B cell (primary cell): ENCODE measurements at regions of chr18 and their contacts with region 1.

Region 1: DNA sequence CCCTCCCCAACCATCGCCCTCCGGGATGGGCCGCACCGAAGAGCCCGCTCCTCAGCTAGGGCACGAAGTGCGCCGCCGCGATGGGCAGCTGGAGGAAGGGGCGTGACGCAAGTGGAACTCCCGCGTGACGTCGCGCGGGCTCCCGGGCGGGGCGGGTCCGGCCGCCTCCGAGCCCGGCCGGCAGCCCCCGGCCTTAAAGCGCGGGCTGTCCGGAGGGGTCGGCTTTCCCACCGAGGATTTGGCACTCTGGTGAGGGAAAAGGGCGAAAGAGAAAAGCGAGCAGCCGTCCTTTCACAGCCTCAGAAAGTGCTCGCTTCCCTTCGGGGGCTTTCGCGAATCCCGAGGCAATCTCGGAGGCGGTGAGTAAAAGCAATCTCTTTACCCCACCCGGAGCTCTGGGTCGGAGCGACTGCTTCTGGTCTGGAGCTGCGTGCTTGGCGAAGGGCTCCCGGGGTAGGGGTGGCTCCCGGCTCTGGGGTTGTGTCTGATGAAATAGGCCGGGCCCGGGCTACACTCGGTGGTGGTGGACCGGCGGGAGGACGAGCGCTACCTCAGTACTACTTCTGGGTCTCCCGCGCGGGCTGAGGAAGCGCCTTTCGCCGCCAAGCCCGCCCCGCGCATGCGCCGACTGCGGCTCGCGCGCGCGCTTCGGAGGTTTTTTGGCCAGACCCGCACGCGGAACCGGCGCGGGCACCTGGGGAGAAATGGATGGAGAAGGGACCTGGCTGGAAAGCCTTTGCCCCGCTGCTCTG is at the start of gene RBBP8:
- DNase-seq: peak; percentile 94
- ATAC-seq: peak; percentile 82
- H3K4me3 ChIP-seq: peak within 1 kb of the TSS; percentile 81 to 99 (median 90)
- H3K4me3 Mint-ChIP-seq: peak within 1 kb of the TSS; percentile 88
- H3K27ac ChIP-seq: peak within 1 kb of the TSS; percentile 99
- H3K27ac Mint-ChIP-seq: peak within 1 kb of the TSS; percentile 96
- H3K4me1 ChIP-seq: peaks cover 6 to 11% of the 10 kb centered on the region in 2 donors
- H3K4me1 Mint-ChIP-seq: peaks cover 18% of the 10 kb centered on the region
- H3K27me3 ChIP-seq: no peaks in the 10 kb centered on the region
- H3K27me3 Mint-ChIP-seq: no peaks in the 10 kb centered on the region
- CTCF ChIP-seq: no peak
- total RNA-seq, gene RBBP8: 18.0 and 19.3 TPM in 2 replicates

Region 2: GRCh38 chr18:21111341-21112139 is 1821.8 kb before region 1 on chr18 and contains the start of gene ROCK1:
- CTCF ChIA-PET with region 1: no interaction called
- POLR2A ChIA-PET with region 1: no interaction called
- intact Hi-C with region 1: loop called (anchors 5 kb)
- DNase-seq: peak; percentile 97
- ATAC-seq: peak; percentile 87
- H3K4me3 ChIP-seq: peak within 1 kb of the TSS; percentile 96 to 100 (median 98)
- H3K4me3 Mint-ChIP-seq: peak within 1 kb of the TSS; percentile 92
- H3K27ac ChIP-seq: peak within 1 kb of the TSS; percentile 94 to 96
- H3K27ac Mint-ChIP-seq: peak within 1 kb of the TSS; percentile 99
- H3K4me1 ChIP-seq: peaks cover 28 to 38% of the 10 kb centered on the region in 2 donors
- H3K4me1 Mint-ChIP-seq: peaks cover 8% of the 10 kb centered on the region
- H3K27me3 ChIP-seq: no peaks in the 10 kb centered on the region
- H3K27me3 Mint-ChIP-seq: no peaks in the 10 kb centered on the region
- CTCF ChIP-seq: no peak
- total RNA-seq, gene ROCK1: 102 and 103 TPM in 2 replicates

Region 3: GRCh38 chr18:22115573-22115972 is 817.8 kb before region 1 on chr18:
- CTCF ChIA-PET with region 1: no interaction called
- POLR2A ChIA-PET with region 1: no interaction called
- intact Hi-C with region 1: no loop called
- DNase-seq: no peak
- ATAC-seq: no peak
- H3K4me3 ChIP-seq: no peak overlapping the region
- H3K4me3 Mint-ChIP-seq: no peak overlapping the region
- H3K27ac ChIP-seq: no peak overlapping the region
- H3K27ac Mint-ChIP-seq: no peak overlapping the region
- H3K4me1 ChIP-seq: no peaks in the 10 kb centered on the region
- H3K4me1 Mint-ChIP-seq: no peaks in the 10 kb centered on the region
- H3K27me3 ChIP-seq: no peaks in the 10 kb centered on the region
- H3K27me3 Mint-ChIP-seq: no peaks in the 10 kb centered on the region
- CTCF ChIP-seq: no peak

Region 4: DNA sequence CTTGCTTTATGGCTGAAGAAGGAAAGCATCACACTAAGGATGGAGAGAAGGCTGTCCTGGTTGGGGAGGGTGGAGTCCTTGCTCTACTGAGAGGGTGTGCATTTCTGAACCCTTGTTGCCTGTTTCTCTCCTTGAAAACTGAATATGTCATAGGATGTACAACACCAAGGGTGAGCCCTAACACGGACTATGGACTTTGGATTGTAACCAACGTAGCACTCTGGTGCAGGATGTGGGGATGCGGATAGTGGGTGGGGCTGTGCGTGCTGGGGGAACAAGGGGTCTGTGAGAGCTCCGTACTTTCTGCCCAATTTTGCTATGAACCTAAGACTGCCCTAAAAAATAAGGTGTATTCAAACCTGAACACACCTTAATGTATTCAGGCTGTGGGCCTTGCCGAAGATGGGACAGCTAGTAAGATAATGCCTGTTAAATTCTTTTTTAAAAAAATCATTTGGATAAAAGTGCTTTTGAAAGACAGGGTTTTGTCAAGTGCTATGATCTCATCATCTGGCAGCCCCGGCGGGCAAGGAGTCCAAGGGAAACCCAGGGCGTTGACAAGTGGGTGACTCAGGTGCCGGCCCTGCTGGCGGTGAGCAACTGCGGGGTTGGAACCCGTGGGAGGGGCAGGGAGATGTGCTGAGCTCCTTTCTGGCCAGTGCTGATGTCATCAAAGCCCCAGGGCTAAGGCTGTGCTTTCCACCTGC is 710.0 kb before region 1 on chr18:
- CTCF ChIA-PET with region 1: no interaction called
- POLR2A ChIA-PET with region 1: no interaction called
- intact Hi-C with region 1: no loop called
- DNase-seq: no peak
- ATAC-seq: no peak
- H3K4me3 ChIP-seq: no peak overlapping the region
- H3K4me3 Mint-ChIP-seq: no peak overlapping the region
- H3K27ac ChIP-seq: no peak overlapping the region
- H3K27ac Mint-ChIP-seq: no peak overlapping the region
- H3K4me1 ChIP-seq: no peaks in the 10 kb centered on the region
- H3K4me1 Mint-ChIP-seq: no peaks in the 10 kb centered on the region
- H3K27me3 ChIP-seq: no peaks in the 10 kb centered on the region
- H3K27me3 Mint-ChIP-seq: peaks cover 3% of the 10 kb centered on the region
- CTCF ChIP-seq: no peak

Region 5: GRCh38 chr18:22710628-22711380 is 222.6 kb before region 1 on chr18:
- CTCF ChIA-PET with region 1: no interaction called
- POLR2A ChIA-PET with region 1: no interaction called
- intact Hi-C with region 1: no loop called
- DNase-seq: no peak
- ATAC-seq: no peak
- H3K4me3 ChIP-seq: no peak overlapping the region
- H3K4me3 Mint-ChIP-seq: no peak overlapping the region
- H3K27ac ChIP-seq: no peak overlapping the region
- H3K27ac Mint-ChIP-seq: no peak overlapping the region
- H3K4me1 ChIP-seq: no peaks in the 10 kb centered on the region
- H3K4me1 Mint-ChIP-seq: no peaks in the 10 kb centered on the region
- H3K27me3 ChIP-seq: no peaks in the 10 kb centered on the region
- H3K27me3 Mint-ChIP-seq: no peaks in the 10 kb centered on the region
- CTCF ChIP-seq: no peak

Region 6: DNA sequence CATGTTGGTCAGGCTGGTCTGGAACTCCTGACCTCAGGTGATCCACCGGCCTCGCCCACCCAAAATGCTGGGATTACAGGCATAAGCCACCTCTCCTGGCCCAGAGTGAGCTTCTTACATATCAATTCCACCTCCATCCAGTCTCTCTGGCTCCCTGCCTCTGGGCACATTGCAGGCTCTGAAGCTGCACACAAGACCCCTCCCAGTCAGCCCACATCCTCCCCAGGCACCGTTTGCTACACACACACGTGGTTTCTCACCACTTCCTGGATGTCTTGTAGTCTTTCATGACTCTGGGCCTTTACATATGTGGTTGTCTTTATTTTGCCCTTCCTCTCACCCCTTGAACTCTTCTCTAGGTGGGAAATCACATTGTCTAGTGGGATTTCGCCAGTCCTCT is 137.9 kb after region 1 on chr18:
- CTCF ChIA-PET with region 1: no interaction called
- POLR2A ChIA-PET with region 1: no interaction called
- intact Hi-C with region 1: loop called (anchors 5 kb)
- DNase-seq: peak; percentile 76
- ATAC-seq: peak; percentile 90
- H3K4me3 ChIP-seq: no peak overlapping the region
- H3K4me3 Mint-ChIP-seq: peak overlapping the region; percentile 70
- H3K27ac ChIP-seq: peak overlapping the region in 1 of 2 donors; percentile 22
- H3K27ac Mint-ChIP-seq: peak overlapping the region; percentile 86
- H3K4me1 ChIP-seq: peaks cover 53 to 60% of the 10 kb centered on the region in 2 donors
- H3K4me1 Mint-ChIP-seq: peaks cover 59% of the 10 kb centered on the region
- H3K27me3 ChIP-seq: no peaks in the 10 kb centered on the region
- H3K27me3 Mint-ChIP-seq: no peaks in the 10 kb centered on the region
- CTCF ChIP-seq: no peak

Region 7: GRCh38 chr18:23231340-23232021 is 298.1 kb after region 1 on chr18:
- CTCF ChIA-PET with region 1: interaction called, 3 read pairs
- POLR2A ChIA-PET with region 1: no interaction called
- intact Hi-C with region 1: loop called (anchors 2 kb)
- DNase-seq: peak; percentile 96
- ATAC-seq: peak; percentile 76
- H3K4me3 ChIP-seq: peak overlapping the region in 3 of 5 experiments; percentile 4 to 14 (median 5)
- H3K4me3 Mint-ChIP-seq: peak overlapping the region; percentile 82
- H3K27ac ChIP-seq: peak overlapping the region; percentile 71 to 78
- H3K27ac Mint-ChIP-seq: peak overlapping the region; percentile 97
- H3K4me1 ChIP-seq: peaks cover 41 to 47% of the 10 kb centered on the region in 2 donors
- H3K4me1 Mint-ChIP-seq: peaks cover 66% of the 10 kb centered on the region
- H3K27me3 ChIP-seq: peaks cover 0 to 12% (median 0%) of the 10 kb centered on the region in 4 experiments
- H3K27me3 Mint-ChIP-seq: no peaks in the 10 kb centered on the region
- CTCF ChIP-seq: no peak

Region 8: DNA sequence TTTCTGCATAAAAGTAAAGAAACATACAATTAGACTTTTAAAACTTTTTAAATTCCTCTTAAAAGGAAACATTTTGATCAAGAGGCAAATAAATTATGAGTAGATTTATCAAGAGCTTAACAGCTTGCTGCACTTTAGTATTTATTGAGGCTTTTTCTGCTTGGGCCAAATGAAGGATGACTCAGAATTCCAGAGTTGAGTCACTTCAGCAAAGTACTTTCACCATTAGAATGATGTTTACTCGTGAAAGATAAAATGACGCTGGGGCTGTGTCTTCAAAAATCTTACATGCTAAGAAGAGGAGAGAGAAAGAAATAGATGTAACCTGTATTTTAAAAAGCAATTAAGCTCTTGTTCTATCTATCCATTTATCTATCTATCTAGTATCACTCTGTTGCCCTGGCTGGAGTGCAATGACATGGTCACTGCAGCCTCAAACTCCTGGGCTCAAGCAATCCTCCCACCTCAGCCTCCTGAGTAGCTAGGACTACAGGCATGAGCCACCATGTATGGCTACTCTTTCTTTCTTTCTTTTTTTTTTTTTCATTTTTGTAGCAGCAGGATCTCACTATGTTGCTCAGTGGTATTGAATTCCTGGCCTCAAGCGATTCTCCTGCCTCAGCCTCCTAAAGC is 444.4 kb after region 1 on chr18:
- CTCF ChIA-PET with region 1: interaction called, 40 read pairs
- POLR2A ChIA-PET with region 1: no interaction called
- intact Hi-C with region 1: loop called (anchors 1 kb)
- DNase-seq: no peak
- ATAC-seq: no peak
- H3K4me3 ChIP-seq: no peak overlapping the region
- H3K4me3 Mint-ChIP-seq: no peak overlapping the region
- H3K27ac ChIP-seq: no peak overlapping the region
- H3K27ac Mint-ChIP-seq: no peak overlapping the region
- H3K4me1 ChIP-seq: no peaks in the 10 kb centered on the region
- H3K4me1 Mint-ChIP-seq: no peaks in the 10 kb centered on the region
- H3K27me3 ChIP-seq: no peaks in the 10 kb centered on the region
- H3K27me3 Mint-ChIP-seq: no peaks in the 10 kb centered on the region
- CTCF ChIP-seq: no peak

Region 9: DNA sequence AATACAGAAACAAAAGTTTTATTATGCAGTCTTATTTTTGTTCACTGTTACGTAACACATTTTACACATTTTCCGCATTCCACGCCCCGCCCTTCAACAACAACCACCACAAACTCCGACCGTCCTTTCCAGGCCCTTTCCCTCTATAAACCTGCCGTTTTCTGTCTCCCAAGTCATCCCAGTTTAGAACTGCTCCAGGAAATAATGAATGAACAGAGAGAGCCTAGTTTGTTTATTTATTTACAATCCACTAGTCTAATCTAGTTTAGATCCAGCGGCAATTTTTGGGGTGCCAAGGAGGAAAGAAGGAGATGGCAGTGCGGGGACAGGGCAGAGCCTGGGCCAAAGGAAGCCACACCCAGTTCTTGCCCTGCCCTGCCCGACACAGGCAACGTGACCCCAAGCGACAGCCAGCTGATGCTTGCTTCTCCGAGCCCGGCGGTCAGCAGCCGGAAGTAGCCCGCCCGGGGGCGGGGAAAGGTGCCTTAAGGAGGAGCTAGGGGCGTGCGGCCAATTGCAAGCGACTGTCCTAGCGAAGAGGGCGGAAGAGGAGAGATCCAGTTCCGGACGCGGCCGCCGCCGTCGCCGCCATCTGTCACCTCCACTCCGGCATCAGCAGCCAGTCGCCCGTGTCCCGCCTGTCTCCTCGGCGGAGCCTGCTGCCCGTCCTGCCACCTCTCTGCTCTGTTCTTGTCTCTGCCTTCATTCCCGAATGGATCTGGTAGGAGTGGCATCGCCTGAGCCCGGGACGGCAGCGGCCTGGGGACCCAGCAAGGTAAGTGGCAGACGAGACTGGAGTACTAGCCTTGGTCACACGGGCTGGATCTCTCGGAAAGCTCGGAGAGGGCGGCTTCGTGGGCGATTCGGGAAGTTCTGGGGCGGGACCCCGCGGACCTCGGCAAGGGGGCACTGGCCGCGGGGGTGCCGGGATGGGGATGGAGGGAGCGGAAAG is 519.6 kb after region 1 on chr18 and contains the start of gene RIOK3:
- CTCF ChIA-PET with region 1: interaction called, 3 read pairs
- POLR2A ChIA-PET with region 1: no interaction called
- intact Hi-C with region 1: loop called (anchors 1 kb)
- DNase-seq: peak; percentile 93
- ATAC-seq: peak; percentile 96
- H3K4me3 ChIP-seq: peak within 1 kb of the TSS; percentile 78 to 94 (median 89)
- H3K4me3 Mint-ChIP-seq: peak within 1 kb of the TSS; percentile 100
- H3K27ac ChIP-seq: peak within 1 kb of the TSS; percentile 84 to 96
- H3K27ac Mint-ChIP-seq: peak within 1 kb of the TSS; percentile 90
- H3K4me1 ChIP-seq: peaks cover 34 to 36% of the 10 kb centered on the region in 2 donors
- H3K4me1 Mint-ChIP-seq: peaks cover 59% of the 10 kb centered on the region
- H3K27me3 ChIP-seq: no peaks in the 10 kb centered on the region
- H3K27me3 Mint-ChIP-seq: no peaks in the 10 kb centered on the region
- CTCF ChIP-seq: no peak
- total RNA-seq, gene RIOK3: 83.4 and 85.1 TPM in 2 replicates